Caco-2 (cell line): ENCODE measurements at regions of chr12 and their contacts with region 1.

Region 1: GRCh38 chr12:26853303-26854030 is 20.5 kb upstream of the ITPR2 start:
- DNase-seq: peak; percentile 66 to 79
- H3K4me3 ChIP-seq: no peak overlapping the region
- H3K4me3 Mint-ChIP-seq: no peak overlapping the region
- H3K27ac Mint-ChIP-seq: no peak overlapping the region
- H3K4me1 ChIP-seq: peaks cover 6% of the 10 kb centered on the region; the same call in 1 of the 2 replicates
- H3K4me1 Mint-ChIP-seq: no peaks in the 10 kb centered on the region
- H3K27me3 ChIP-seq: no peaks in the 10 kb centered on the region
- H3K27me3 Mint-ChIP-seq: no peaks in the 10 kb centered on the region
- CTCF ChIP-seq: peak; percentile 96 to 97

Region 2: DNA sequence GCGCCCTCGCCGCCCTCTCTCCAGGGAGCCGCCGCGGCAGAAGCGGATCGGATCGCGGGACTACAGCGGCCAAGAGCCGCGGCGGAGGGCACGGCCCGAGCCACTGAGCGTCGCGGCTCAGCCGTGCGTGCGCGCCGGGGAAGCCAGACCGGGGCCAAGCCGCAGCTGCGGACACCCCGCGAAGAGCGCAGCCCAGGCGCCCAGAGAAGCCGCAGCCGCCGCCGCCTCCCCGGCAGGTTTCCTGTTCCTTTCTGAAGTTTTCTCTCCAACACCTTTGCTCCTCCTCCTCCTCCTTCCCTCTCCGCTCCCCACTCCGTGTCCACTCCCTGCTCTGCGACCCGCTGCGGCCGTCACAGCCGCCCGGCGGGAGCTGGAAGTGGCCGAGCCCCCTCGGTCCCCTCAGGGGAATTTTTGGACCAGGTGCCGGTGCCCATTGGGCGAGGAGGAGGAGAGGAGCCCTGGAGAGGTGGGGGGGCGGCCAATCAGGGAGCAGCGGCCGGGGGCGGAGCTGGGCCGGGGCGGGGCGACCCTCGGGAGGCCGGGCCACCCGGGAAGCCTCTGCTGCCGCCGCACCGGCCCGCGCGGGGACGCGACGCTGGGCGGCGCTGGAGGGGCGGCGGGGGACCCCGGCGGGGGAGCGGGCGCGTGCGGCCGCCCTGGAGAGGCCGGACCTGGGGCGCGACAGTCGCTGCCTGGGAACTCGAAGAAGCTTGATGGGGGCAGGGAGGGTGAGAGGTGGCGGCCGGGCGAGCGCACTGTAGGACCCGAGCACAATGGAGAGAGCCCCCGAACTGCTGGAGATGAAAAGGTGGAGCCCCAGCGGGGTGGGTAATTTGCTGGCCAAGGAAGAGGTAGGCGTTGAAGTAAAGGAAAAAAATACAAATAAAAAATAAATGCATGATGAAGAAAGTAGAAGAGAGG is 20.4 kb before region 1 on chr12 and contains the start of gene ITPR2:
- CTCF ChIA-PET with region 1: no interaction called
- POLR2A ChIA-PET with region 1: no interaction called
- intact Hi-C with region 1: no loop called
- DNase-seq: peak; percentile 98 to 99
- H3K4me3 ChIP-seq: peak within 1 kb of the TSS; percentile 97
- H3K4me3 Mint-ChIP-seq: peak within 1 kb of the TSS; percentile 87
- H3K27ac Mint-ChIP-seq: peak within 1 kb of the TSS; percentile 86
- H3K4me1 ChIP-seq: 0 out of 2 replicates have a peak, but pooled peaks cover 8% of the 10 kb centered on the region
- H3K4me1 Mint-ChIP-seq: peaks cover 16% of the 10 kb centered on the region
- H3K27me3 ChIP-seq: no peaks in the 10 kb centered on the region
- H3K27me3 Mint-ChIP-seq: no peaks in the 10 kb centered on the region
- CTCF ChIP-seq: peak; percentile 18 to 36
- total RNA-seq, gene ITPR2: 41.6 and 51.5 TPM in 2 replicates

Region 3: GRCh38 chr12:26870491-26871419 is 17.3 kb after region 1 on chr12:
- CTCF ChIA-PET with region 1: no interaction called
- POLR2A ChIA-PET with region 1: no interaction called
- intact Hi-C with region 1: loop called (anchors 2 kb)
- DNase-seq: no peak
- H3K4me3 ChIP-seq: no peak overlapping the region
- H3K4me3 Mint-ChIP-seq: no peak overlapping the region
- H3K27ac Mint-ChIP-seq: peak overlapping the region; percentile 4
- H3K4me1 ChIP-seq: peaks cover 15% of the 10 kb centered on the region
- H3K4me1 Mint-ChIP-seq: peaks cover 12% of the 10 kb centered on the region
- H3K27me3 ChIP-seq: no peaks in the 10 kb centered on the region
- H3K27me3 Mint-ChIP-seq: peaks cover 4% of the 10 kb centered on the region
- CTCF ChIP-seq: no peak

Region 4: DNA sequence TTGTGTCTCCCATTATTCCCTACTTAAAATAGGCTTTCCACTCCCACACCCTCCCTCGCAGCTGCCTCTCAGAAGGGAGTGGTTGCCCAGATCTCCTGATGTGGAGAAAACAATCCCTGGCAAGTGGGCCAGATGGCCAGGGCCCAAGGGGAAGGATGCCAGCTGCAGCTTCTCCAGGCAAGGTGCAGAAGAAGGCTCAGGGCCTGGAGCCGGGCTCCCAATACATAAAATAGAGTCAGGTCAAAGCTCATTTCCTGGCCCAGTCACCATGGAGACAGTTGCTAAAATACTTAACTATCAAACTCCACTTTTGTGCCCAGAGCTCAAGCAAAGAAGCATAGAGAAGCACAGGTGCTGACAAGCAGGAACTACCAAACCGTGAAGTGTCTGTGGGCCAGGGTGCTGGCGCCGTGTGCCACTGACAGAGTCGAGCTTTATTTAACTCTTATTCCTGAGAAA is 25.2 kb after region 1 on chr12:
- CTCF ChIA-PET with region 1: interaction called, 5 read pairs
- POLR2A ChIA-PET with region 1: no interaction called
- intact Hi-C with region 1: loop called (anchors 1 kb)
- DNase-seq: no peak
- H3K4me3 ChIP-seq: no peak overlapping the region
- H3K4me3 Mint-ChIP-seq: no peak overlapping the region
- H3K27ac Mint-ChIP-seq: no peak overlapping the region
- H3K4me1 ChIP-seq: no peaks in the 10 kb centered on the region
- H3K4me1 Mint-ChIP-seq: no peaks in the 10 kb centered on the region
- H3K27me3 ChIP-seq: no peaks in the 10 kb centered on the region
- H3K27me3 Mint-ChIP-seq: no peaks in the 10 kb centered on the region
- CTCF ChIP-seq: no peak

Region 5: DNA sequence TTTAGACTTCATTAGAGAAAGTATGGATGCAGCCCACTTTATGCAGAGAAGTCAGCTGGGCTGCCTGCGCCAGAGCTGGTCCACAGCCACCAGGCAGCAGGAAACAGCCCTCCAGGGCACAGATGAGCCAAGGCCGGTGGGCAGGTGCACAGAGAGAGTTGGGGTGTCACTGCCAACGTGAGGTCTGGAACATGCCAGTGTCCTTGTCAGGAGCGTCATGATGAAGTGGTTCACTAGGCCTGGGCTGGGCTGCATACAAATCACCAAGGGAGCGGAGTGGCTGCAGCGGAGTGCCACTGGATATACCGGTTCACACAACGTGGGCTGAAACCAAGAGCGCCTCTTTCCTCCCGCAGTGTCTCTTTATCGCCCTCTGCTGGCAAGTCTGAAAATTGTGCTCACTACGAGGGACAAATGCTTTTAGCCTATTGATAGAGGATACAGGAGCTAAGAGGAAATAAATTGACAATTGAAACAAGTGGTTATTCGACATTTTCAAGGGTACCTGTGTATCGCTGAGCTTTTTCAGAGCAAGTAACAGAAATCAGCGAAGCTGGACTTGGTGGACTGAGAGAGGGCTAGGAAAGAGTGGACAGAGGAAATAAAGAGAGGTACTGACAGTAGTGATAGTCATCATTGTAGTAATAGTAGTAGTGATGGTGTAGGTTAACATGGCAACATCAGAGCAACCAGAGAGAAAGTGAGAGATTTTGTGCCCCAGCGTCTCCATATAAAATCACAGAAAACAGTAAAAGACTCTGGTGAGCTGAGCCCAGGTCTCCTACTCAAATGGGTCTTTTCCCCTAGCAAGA is 31.5 kb after region 1 on chr12:
- CTCF ChIA-PET with region 1: interaction called, 5 read pairs
- POLR2A ChIA-PET with region 1: no interaction called
- intact Hi-C with region 1: loop called (anchors 1 kb)
- DNase-seq: peak; percentile 90 to 92
- H3K4me3 ChIP-seq: no peak overlapping the region
- H3K4me3 Mint-ChIP-seq: no peak overlapping the region
- H3K27ac Mint-ChIP-seq: no peak overlapping the region
- H3K4me1 ChIP-seq: no peaks in the 10 kb centered on the region
- H3K4me1 Mint-ChIP-seq: no peaks in the 10 kb centered on the region
- H3K27me3 ChIP-seq: no peaks in the 10 kb centered on the region
- H3K27me3 Mint-ChIP-seq: no peaks in the 10 kb centered on the region
- CTCF ChIP-seq: peak; percentile 98 to 99

Region 6: GRCh38 chr12:27024291-27024690 is 170.8 kb after region 1 on chr12:
- CTCF ChIA-PET with region 1: no interaction called
- POLR2A ChIA-PET with region 1: no interaction called
- intact Hi-C with region 1: no loop called
- DNase-seq: no peak
- H3K4me3 ChIP-seq: no peak overlapping the region
- H3K4me3 Mint-ChIP-seq: no peak overlapping the region
- H3K27ac Mint-ChIP-seq: no peak overlapping the region
- H3K4me1 ChIP-seq: no peaks in the 10 kb centered on the region
- H3K4me1 Mint-ChIP-seq: peaks cover 7% of the 10 kb centered on the region
- H3K27me3 ChIP-seq: no peaks in the 10 kb centered on the region
- H3K27me3 Mint-ChIP-seq: no peaks in the 10 kb centered on the region
- CTCF ChIP-seq: no peak

Region 7: DNA sequence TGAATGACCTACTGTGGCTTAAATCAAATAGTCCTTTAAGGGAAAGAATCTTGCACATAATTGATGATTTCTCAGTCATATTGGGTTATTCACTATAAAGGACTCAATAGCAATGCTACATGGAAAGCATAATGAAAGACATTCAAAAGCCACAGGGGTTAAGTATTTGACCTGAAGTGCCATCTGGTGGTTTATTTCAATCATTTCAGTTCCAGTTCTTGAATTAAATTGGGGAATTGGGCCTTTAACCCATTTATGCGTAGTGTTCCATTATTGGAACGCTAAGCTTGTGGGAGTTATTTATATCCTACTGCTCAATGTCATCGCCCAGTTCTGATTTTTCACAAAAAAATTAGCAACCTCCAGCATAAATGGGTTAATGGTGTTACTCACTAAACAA is 270.2 kb after region 1 on chr12:
- CTCF ChIA-PET with region 1: no interaction called
- POLR2A ChIA-PET with region 1: no interaction called
- intact Hi-C with region 1: no loop called
- DNase-seq: no peak
- H3K4me3 ChIP-seq: no peak overlapping the region
- H3K4me3 Mint-ChIP-seq: no peak overlapping the region
- H3K27ac Mint-ChIP-seq: no peak overlapping the region
- H3K4me1 ChIP-seq: no peaks in the 10 kb centered on the region
- H3K4me1 Mint-ChIP-seq: no peaks in the 10 kb centered on the region
- H3K27me3 ChIP-seq: no peaks in the 10 kb centered on the region
- H3K27me3 Mint-ChIP-seq: peaks cover 6% of the 10 kb centered on the region
- CTCF ChIP-seq: peak; percentile 18 to 32

Region 8: GRCh38 chr12:27142101-27142721 is 288.7 kb after region 1 on chr12:
- CTCF ChIA-PET with region 1: no interaction called
- POLR2A ChIA-PET with region 1: no interaction called
- intact Hi-C with region 1: loop called (anchors 5 kb)
- DNase-seq: peak; percentile 77 to 82
- H3K4me3 ChIP-seq: no peak overlapping the region
- H3K4me3 Mint-ChIP-seq: no peak overlapping the region
- H3K27ac Mint-ChIP-seq: no peak overlapping the region
- H3K4me1 ChIP-seq: no peaks in the 10 kb centered on the region
- H3K4me1 Mint-ChIP-seq: peaks cover 6% of the 10 kb centered on the region
- H3K27me3 ChIP-seq: no peaks in the 10 kb centered on the region
- H3K27me3 Mint-ChIP-seq: peaks cover 2% of the 10 kb centered on the region
- CTCF ChIP-seq: peak; percentile 90 to 94

Region 9: GRCh38 chr12:27243804-27244683 is 390.6 kb after region 1 on chr12 and contains the start of gene STK38L:
- CTCF ChIA-PET with region 1: no interaction called
- POLR2A ChIA-PET with region 1: no interaction called
- intact Hi-C with region 1: loop called (anchors 10 kb)
- DNase-seq: peak; percentile 100
- H3K4me3 ChIP-seq: peak within 1 kb of the TSS; percentile 84
- H3K4me3 Mint-ChIP-seq: peak within 1 kb of the TSS; percentile 88
- H3K27ac Mint-ChIP-seq: peak within 1 kb of the TSS; percentile 89
- H3K4me1 ChIP-seq: peaks cover 10% of the 10 kb centered on the region; the same call in 1 of the 2 replicates
- H3K4me1 Mint-ChIP-seq: peaks cover 20% of the 10 kb centered on the region
- H3K27me3 ChIP-seq: no peaks in the 10 kb centered on the region
- H3K27me3 Mint-ChIP-seq: peaks cover 3% of the 10 kb centered on the region
- CTCF ChIP-seq: peak; percentile 26 to 27
- total RNA-seq, gene STK38L: 52.0 and 59.4 TPM in 2 replicates